AG04449 (cell line): ENCODE measurements at regions of chr11 and their contacts with region 1.

Region 1: DNA sequence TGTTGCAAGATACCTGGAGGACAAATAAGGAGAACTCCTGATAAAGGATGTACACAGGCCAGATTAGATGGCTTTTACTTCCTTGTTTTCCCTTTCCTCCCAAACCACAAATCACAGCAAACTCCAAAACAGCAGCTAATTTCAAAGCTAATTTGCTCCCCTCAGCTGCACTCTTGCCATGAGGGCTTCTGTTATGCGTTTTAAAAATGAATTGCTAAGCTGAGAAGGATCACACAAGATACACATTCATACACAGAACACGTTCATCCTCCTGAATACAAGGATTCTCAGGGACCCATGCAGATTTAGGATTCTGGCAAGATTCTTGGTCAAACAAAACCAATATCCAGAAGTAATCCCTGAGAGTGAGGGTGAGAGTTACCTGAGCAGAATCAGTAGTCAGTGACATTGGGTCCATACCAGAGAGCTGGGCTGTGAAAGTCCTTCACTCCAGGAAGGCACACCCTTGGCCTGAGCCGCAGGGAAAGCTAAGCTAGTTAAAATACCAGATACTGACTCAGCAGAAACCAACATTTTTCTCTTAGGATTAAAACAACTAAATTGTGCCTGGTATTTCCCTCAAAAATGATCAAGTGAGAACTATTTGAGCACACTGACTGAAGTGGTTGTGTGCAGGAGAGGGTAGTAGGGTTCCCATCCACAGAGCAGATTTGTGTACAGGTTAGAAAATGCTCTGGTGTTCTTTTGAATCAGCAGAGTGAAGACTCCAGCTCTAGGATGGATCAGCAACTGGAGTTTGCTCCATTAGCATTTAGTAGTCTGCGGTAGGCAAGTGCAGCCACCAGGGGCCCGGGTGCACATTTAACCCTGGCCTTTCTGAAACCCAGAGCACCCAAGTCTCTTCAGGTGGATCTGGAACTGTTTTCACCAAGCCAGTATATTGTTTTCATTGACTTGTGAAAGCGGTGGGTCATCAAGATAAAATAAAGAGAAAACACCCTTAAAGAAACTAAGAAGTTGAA is 100.5 kb upstream of the CLPB start:
- DNase-seq: peak; percentile 3
- H3K4me3 ChIP-seq: no peak overlapping the region
- CTCF ChIP-seq: no peak

Region 2: GRCh38 chr11:72519220-72519881 is 15.5 kb before region 1 on chr11:
- CTCF ChIA-PET with region 1: no interaction called
- POLR2A ChIA-PET with region 1: no interaction called
- DNase-seq: no peak
- H3K4me3 ChIP-seq: peak overlapping the region; percentile 34
- CTCF ChIP-seq: no peak

Region 3: GRCh38 chr11:72546866-72547265 is 12.0 kb after region 1 on chr11:
- CTCF ChIA-PET with region 1: interaction called, 21 read pairs
- POLR2A ChIA-PET with region 1: no interaction called
- DNase-seq: no peak
- H3K4me3 ChIP-seq: no peak overlapping the region
- CTCF ChIP-seq: no peak

Region 4: DNA sequence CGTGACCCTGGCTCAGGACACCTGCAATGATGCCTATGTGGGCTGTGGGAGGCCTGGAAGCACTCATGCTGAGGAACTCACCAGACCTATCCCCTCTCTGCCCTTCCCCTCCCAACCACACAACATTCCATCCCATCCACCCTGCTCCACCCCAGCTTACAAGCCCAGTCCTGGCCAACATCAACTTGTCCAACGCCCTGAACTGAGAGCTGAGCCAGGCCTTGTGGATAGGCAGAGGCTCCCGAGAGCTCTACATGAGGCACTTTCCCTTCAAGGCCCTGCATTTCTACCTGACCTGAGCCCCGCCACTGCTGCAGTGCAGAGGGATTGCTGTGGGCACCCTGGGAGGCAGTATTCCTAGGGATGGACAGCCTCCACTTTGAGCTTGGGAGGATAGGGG is 27.0 kb after region 1 on chr11:
- CTCF ChIA-PET with region 1: no interaction called
- POLR2A ChIA-PET with region 1: no interaction called
- DNase-seq: no peak
- H3K4me3 ChIP-seq: no peak overlapping the region
- CTCF ChIP-seq: no peak